Activated naive CD4-positive, alpha-beta T cell treated with anti-CD3 and anti-CD28 coated beads, Interleukin-2, amount 10 ng/mL, durations not matched to agents 7 days and 5 days (primary cell): ENCODE measurements at regions of chr10 and their contacts with region 1.

Region 1: DNA sequence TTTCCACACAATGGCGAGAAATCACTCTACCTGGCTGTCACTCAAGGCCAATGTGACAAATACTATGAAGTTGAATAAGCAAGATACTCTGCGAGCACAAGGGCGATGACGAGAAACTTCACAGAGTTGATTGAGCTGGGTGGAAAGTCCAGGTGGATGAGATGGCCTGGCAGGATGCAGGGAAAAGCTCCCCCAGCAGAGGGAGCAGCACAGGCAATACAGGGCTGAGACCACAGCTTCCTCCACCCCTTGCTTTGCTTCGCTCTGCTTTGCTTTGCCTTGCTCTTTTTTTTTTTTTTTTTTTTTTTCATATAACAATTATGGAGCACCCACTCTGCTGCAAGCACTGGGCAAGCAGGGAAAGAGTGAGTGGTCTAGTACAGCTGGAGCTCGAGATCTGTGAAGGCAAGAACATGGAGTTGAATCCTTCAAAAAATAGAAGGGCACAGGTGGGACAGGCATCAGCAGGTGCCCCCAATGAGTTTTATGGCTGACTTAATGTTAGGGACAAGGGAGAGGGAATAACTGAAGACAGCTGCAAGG is 88.3 kb downstream of the CABCOCO1 start:
- DNase-seq: peak; percentile 81
- H3K4me3 Mint-ChIP-seq: no peak overlapping the region
- H3K27ac Mint-ChIP-seq: no peak overlapping the region
- H3K4me1 Mint-ChIP-seq: peaks cover 29% of the 10 kb centered on the region
- H3K27me3 Mint-ChIP-seq: no peaks in the 10 kb centered on the region

Region 2: GRCh38 chr10:61621605-61622060 is 129.4 kb before region 1 on chr10:
- CTCF ChIA-PET with region 1: no interaction called
- DNase-seq: no peak
- H3K4me3 Mint-ChIP-seq: no peak overlapping the region
- H3K27ac Mint-ChIP-seq: no peak overlapping the region
- H3K4me1 Mint-ChIP-seq: no peaks in the 10 kb centered on the region
- H3K27me3 Mint-ChIP-seq: no peaks in the 10 kb centered on the region

Region 3: GRCh38 chr10:61821153-61821552 is 70.2 kb after region 1 on chr10:
- CTCF ChIA-PET with region 1: interaction called, 29 read pairs
- DNase-seq: no peak
- H3K4me3 Mint-ChIP-seq: no peak overlapping the region
- H3K27ac Mint-ChIP-seq: no peak overlapping the region
- H3K4me1 Mint-ChIP-seq: no peaks in the 10 kb centered on the region
- H3K27me3 Mint-ChIP-seq: no peaks in the 10 kb centered on the region

Region 4: DNA sequence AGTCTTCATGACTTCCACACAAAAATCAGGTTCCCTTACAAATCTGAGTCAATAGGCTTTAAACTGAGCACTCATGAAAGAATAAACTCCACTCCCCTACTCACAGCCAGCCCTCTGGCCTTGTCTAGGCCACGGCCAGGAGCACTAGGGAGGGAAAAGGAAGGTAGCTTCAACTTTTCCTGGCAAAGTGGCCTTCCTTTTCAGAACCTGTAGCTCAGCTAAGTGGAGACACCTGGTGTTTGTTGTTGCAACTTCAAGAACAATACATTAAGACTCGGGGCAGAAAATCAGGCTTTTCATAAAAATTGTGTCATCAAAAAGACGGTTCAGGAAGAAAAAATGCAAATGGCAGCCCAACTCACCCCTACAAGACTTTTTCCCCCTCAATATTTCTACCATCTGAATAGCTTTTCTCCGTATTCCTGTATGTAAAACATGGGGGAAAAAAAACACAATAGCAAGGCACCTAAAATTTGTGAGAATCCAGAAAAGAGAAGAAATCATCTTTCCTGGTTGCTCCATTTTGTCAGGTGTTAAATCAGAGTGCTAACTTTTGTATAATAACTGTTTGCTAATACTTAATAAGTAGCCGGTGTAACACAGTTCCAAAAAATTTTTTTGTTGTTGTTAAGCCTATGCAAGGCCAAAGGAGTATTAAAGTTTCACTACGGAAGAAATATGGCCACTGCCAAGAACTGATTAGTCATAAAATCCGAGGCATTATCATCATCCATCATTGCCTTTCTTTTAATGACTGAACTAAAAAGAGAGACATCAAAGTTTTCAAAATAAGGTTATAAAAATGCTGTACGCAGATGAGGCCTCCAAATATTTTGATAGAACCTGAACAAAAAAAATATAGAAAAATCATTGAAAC is 84.3 kb after region 1 on chr10:
- CTCF ChIA-PET with region 1: interaction called, 62 read pairs
- DNase-seq: peak; percentile 27
- H3K4me3 Mint-ChIP-seq: no peak overlapping the region
- H3K27ac Mint-ChIP-seq: no peak overlapping the region
- H3K4me1 Mint-ChIP-seq: peaks cover 10% of the 10 kb centered on the region
- H3K27me3 Mint-ChIP-seq: no peaks in the 10 kb centered on the region

Region 5: DNA sequence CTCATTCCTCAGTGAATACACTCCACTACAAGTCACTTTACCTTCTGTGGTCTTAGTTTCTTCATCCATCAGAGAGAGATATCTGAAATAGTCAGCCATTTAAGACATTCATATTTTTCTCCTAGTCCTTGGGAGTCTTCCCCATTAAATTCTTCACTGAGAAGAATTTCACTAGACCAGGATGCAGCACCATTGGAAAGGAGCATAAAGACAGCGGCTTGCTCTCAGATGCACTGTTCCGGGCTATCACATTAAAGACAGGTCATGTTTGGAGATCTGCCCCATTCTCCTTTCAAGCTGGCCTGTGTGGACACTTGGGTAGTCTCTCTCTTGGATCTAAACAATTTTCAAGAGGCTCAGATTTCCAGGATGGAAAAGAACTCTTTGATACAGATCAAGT is 118.3 kb after region 1 on chr10:
- CTCF ChIA-PET with region 1: interaction called, 20 read pairs
- DNase-seq: no peak
- H3K4me3 Mint-ChIP-seq: no peak overlapping the region
- H3K27ac Mint-ChIP-seq: no peak overlapping the region
- H3K4me1 Mint-ChIP-seq: peaks cover 12% of the 10 kb centered on the region
- H3K27me3 Mint-ChIP-seq: peaks cover 8% of the 10 kb centered on the region

Region 6: GRCh38 chr10:61903221-61903927 is 152.4 kb after region 1 on chr10:
- CTCF ChIA-PET with region 1: interaction called, 10 read pairs
- DNase-seq: peak; percentile 81
- H3K4me3 Mint-ChIP-seq: peak overlapping the region; percentile 94
- H3K27ac Mint-ChIP-seq: peak overlapping the region; percentile 99
- H3K4me1 Mint-ChIP-seq: peaks cover 55% of the 10 kb centered on the region
- H3K27me3 Mint-ChIP-seq: no peaks in the 10 kb centered on the region